CD4-positive, alpha-beta memory T cell (primary cell): ENCODE measurements at regions of chr3 and their contacts with region 1.

Region 1: DNA sequence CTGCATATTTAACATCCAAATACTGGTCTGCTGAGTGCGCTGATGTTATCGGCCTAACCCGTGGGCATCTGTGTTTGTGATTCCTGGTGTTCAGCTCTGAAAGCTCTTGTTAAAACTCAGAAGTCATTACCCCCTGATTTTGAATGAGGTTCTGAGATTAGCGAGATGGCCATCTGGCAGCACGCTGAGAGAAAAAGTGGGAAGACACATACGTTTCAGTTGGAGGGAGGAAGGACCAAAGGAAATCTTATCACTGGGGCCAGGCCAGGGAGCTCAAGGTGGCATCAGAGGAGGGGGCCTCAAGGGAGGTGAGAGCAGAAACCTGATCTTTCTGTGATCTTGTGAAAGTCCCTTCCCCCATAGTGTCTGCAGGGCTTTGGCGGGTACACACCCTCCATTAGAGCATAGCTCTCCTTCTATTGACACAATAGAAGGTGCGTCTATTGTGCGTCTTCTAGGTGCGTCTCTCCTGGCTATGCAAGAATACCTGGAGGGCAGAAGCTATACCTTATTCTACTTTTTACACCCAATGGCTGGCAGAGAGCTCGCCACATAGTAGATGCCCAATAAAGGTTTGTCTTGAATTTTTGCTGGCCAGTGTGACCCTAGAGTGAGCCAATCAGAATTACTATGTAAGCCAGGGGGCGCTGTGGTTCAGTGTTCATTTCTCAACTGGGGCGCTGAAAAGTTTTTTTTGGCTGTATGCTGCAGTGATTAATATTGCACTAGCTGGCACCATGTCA is 182.4 kb downstream of the SHQ1 start:
- DNase-seq: peak in 4 of 5 donors; percentile 45 to 54 (median 48)
- H3K4me3 ChIP-seq: no peak overlapping the region
- H3K4me3 Mint-ChIP-seq: no peak overlapping the region
- H3K27ac ChIP-seq: no peak overlapping the region
- H3K27ac Mint-ChIP-seq: peak overlapping the region in 1 of 7 donors; percentile 36
- H3K4me1 ChIP-seq: no peaks in the 10 kb centered on the region
- H3K4me1 Mint-ChIP-seq: no peaks in the 10 kb centered on the region
- H3K27me3 ChIP-seq: no peaks in the 10 kb centered on the region
- H3K27me3 Mint-ChIP-seq: no peaks in the 10 kb centered on the region

Region 2: DNA sequence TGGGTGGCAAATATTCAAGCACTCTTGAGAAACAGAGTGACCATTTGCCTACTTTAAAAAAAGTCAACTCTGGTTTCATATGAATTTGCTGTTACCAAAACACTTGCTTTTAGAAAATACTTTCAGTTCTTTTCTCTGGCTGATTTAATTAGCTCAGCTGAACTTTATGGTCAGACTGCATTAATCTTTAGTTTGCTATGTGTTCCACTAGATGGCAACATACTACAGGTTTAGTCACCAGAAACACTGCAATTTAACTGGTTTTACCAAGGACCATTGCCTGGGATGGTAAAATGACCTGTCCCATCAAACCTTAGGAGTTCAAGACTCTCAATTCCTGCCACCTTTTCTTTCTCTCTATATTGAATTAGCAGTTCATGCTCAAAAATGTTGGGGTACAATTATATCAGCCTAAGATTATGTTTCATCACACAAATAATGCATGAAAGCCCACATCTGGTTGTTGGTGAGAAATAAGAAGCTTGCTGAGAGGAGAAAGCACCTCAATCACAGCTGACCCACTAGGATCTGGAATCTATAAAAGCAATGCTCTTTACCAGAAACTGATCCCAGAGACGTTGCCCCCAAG is 954.9 kb before region 1 on chr3:
- CTCF ChIA-PET with region 1: interaction called, 12 read pairs
- POLR2A ChIA-PET with region 1: no interaction called
- intact Hi-C with region 1: no loop called
- DNase-seq: peak in 4 of 5 donors; percentile 50 to 59 (median 56)
- H3K4me3 ChIP-seq: no peak overlapping the region
- H3K4me3 Mint-ChIP-seq: peak overlapping the region in 3 of 8 donors; percentile 25 to 47 (median 25)
- H3K27ac ChIP-seq: no peak overlapping the region
- H3K27ac Mint-ChIP-seq: peak overlapping the region in 3 of 7 donors; percentile 80 to 83 (median 81)
- H3K4me1 ChIP-seq: peaks cover 87% of the 10 kb centered on the region
- H3K4me1 Mint-ChIP-seq: peaks cover 66 to 92% (median 74%) of the 10 kb centered on the region in 4 donors
- H3K27me3 ChIP-seq: no peaks in the 10 kb centered on the region
- H3K27me3 Mint-ChIP-seq: no peaks in the 10 kb centered on the region

Region 3: DNA sequence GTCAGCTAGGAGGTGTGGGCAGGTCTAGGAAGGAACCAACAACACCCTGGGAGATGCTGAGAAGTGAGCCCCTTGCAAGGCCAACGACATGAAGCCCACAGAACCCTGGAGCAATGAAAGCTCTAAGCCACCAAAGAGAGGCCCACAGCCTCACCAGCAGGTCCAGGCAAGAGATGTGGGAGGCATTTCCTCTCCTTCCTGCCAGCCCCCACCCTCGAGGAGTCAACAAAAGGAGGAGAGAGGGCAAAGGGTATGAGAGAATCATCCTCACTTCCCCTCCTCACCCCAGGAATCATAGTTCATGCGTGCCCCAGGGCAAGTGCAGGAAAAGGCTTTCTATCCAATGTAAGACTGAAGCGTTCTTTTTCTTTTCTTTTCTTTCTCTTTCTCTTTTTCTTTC is 13.5 kb before region 1 on chr3:
- CTCF ChIA-PET with region 1: interaction called, 14 read pairs
- POLR2A ChIA-PET with region 1: no interaction called
- intact Hi-C with region 1: no loop called
- DNase-seq: no peak
- H3K4me3 ChIP-seq: no peak overlapping the region
- H3K4me3 Mint-ChIP-seq: no peak overlapping the region
- H3K27ac ChIP-seq: no peak overlapping the region
- H3K27ac Mint-ChIP-seq: no peak overlapping the region
- H3K4me1 ChIP-seq: peaks cover under 1% of the 10 kb centered on the region
- H3K4me1 Mint-ChIP-seq: peaks cover 0 to 3% (median 1%) of the 10 kb centered on the region in 4 donors
- H3K27me3 ChIP-seq: no peaks in the 10 kb centered on the region
- H3K27me3 Mint-ChIP-seq: peaks cover 1 to 2% of the 10 kb centered on the region in 2 donors

Region 4: GRCh38 chr3:72756900-72757299 is 91.0 kb after region 1 on chr3:
- CTCF ChIA-PET with region 1: no interaction called
- POLR2A ChIA-PET with region 1: no interaction called
- intact Hi-C with region 1: loop called (anchors 5 kb)
- DNase-seq: peak; percentile 67 to 77 (median 71)
- H3K4me3 ChIP-seq: peak overlapping the region in 1 of 2 donors; percentile 25
- H3K4me3 Mint-ChIP-seq: peak overlapping the region; percentile 50 to 84 (median 68)
- H3K27ac ChIP-seq: peak overlapping the region; percentile 49
- H3K27ac Mint-ChIP-seq: peak overlapping the region; percentile 74 to 97 (median 92)
- H3K4me1 ChIP-seq: peaks cover 34% of the 10 kb centered on the region
- H3K4me1 Mint-ChIP-seq: peaks cover 24 to 40% (median 33%) of the 10 kb centered on the region in 4 donors
- H3K27me3 ChIP-seq: no peaks in the 10 kb centered on the region
- H3K27me3 Mint-ChIP-seq: no peaks in the 10 kb centered on the region

Region 5: DNA sequence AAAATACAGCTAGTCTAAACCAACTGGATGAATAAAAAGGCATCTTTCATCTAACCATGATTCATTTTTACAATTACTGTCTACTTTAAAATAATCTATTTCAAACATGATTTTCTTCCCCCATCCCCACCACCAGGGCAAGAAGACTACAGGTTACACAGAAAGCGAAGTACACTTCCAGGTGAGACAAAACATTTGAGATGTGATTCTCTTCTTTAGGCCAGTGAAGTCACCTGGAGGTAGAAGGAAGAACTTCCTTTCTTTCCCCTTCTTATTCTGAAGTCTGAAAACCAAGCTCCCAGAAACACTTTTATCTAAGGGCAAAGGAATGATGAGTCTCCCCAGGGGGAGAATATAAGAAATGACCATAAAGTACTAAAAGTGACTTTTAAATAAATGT is 145.7 kb after region 1 on chr3:
- CTCF ChIA-PET with region 1: interaction called, 28 read pairs
- POLR2A ChIA-PET with region 1: no interaction called
- intact Hi-C with region 1: no loop called
- DNase-seq: no peak
- H3K4me3 ChIP-seq: no peak overlapping the region
- H3K4me3 Mint-ChIP-seq: no peak overlapping the region
- H3K27ac ChIP-seq: no peak overlapping the region
- H3K27ac Mint-ChIP-seq: no peak overlapping the region
- H3K4me1 ChIP-seq: no peaks in the 10 kb centered on the region
- H3K4me1 Mint-ChIP-seq: no peaks in the 10 kb centered on the region
- H3K27me3 ChIP-seq: no peaks in the 10 kb centered on the region
- H3K27me3 Mint-ChIP-seq: no peaks in the 10 kb centered on the region

Region 6: GRCh38 chr3:73056014-73056844 is 390.4 kb after region 1 on chr3:
- CTCF ChIA-PET with region 1: interaction called, 12 read pairs
- POLR2A ChIA-PET with region 1: no interaction called
- intact Hi-C with region 1: no loop called
- DNase-seq: peak in 4 of 5 donors; percentile 28 to 47 (median 38)
- H3K4me3 ChIP-seq: no peak overlapping the region
- H3K4me3 Mint-ChIP-seq: no peak overlapping the region
- H3K27ac ChIP-seq: no peak overlapping the region
- H3K27ac Mint-ChIP-seq: peak overlapping the region in 6 of 7 donors; percentile 0 to 80 (median 33)
- H3K4me1 ChIP-seq: peaks cover 9% of the 10 kb centered on the region
- H3K4me1 Mint-ChIP-seq: peaks cover 18 to 21% (median 19%) of the 10 kb centered on the region in 4 donors
- H3K27me3 ChIP-seq: no peaks in the 10 kb centered on the region
- H3K27me3 Mint-ChIP-seq: no peaks in the 10 kb centered on the region